HepG2 (cell line): ENCODE measurements at regions of chr12 and their contacts with region 1.

Region 1: GRCh38 chr12:112409906-112410244 is 470 bp upstream of the RPL6 start:
- DNase-seq: no peak
- ATAC-seq: no peak
- H3K4me3 ChIP-seq: peak overlapping the region in 1 of 3 experiments; percentile 92; a peak in 2 of 6 replicates
- H3K27ac ChIP-seq: no peak overlapping the region
- H3K4me1 ChIP-seq: peaks cover 50% of the 10 kb centered on the region
- H3K27me3 ChIP-seq: no peaks in the 10 kb centered on the region; a peak in 1 of 5 replicates
- CTCF ChIP-seq: no peak
- EP300 ChIP-seq: no peak
- POLR2A ChIP-seq: no peak
- RAD21 ChIP-seq: no peak

Region 2: DNA sequence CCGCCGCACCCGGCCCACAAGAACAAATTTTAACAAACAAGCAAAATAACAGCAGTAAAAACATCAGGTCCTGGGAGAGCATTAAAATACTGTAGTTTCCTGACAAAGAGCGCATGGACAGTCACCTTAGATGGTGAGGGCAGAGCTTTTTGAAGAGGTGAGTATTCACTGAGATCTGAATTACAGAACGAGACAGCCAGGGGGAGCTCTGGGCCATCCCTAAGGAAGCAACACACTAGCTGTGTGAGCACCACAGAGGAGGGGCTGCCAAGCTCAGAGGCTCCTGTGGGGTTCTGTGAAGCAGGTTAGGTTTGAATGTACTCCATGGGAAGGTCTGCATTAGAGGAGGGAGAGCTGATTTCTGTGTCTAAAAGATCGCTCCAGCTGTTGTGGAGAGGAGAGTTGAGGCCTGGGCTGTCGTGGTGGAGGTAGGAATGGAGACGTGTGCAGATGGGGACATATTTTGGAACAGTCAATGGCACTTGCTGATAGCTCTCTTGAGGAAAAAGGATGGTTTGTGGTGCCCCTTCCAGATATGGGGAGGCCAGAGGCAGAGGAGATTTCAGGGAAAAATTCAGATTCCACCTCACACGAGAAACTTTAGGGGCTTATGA is 211.6 kb before region 1 on chr12:
- CTCF ChIA-PET with region 1: interaction called, 8 read pairs
- POLR2A ChIA-PET with region 1: interaction called, 7 read pairs
- in situ Hi-C with region 1: no loop called
- intact Hi-C with region 1: loop called (anchors 2 kb)
- DNase-seq: peak; percentile 64
- ATAC-seq: peak; percentile 100
- H3K4me3 ChIP-seq: no peak overlapping the region
- H3K27ac ChIP-seq: no peak overlapping the region
- H3K4me1 ChIP-seq: no peaks in the 10 kb centered on the region
- H3K27me3 ChIP-seq: no peaks in the 10 kb centered on the region
- CTCF ChIP-seq: peak; percentile 84
- EP300 ChIP-seq: no peak
- POLR2A ChIP-seq: no peak
- RAD21 ChIP-seq: peak; percentile 67